ENCODE measurements at regions of chr21 and their contacts with region 1.

Region 1: DNA sequence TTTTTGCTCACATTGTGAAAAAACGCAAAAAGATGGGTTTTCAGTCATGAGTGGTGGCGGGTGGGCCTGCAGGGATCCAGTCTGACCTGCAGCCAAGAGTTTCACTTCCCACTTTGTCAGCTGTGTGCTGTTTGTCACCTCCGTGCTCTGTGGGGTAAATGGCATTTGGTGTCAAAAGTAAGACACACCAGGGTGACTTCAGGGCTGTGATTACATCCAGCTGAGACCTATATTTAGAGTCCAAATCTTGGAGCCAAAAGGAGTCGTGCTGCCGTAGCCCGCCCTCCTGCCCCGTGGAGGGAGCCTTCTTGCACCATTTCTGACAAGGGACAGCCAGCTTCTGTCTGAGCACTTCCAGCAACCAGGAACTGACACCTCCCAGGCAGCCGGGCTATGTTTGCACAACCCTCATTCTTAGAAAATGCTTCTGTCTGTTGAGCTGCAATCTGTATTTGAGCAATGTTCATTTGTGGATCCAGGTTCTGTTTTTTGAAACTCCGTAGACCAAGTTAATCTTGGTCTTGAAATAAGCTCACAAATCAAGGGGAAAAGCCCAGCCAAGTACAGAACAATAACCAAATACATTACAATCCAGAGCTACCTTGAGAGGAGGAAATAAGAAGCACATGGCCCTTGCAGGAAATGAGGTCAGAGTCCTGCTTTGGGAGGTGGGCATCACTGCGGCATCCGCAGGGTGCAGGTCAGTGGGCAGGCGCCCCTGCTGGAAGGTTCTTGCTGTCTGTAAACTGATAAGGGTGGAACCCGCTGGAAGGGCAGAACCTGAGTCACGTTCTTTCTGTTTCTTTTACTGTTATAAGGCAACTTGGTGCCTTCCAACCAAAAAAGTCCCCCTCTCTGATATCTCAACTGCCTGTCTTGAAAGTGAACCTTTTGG is 14.4 kb downstream of the ABCG1 start:
- DNase-seq: peak; percentile 93
- H3K4me3 Mint-ChIP-seq: peak overlapping the region; percentile 82
- H3K27ac Mint-ChIP-seq: peak overlapping the region; percentile 97
- H3K4me1 Mint-ChIP-seq: peaks cover 84% of the 10 kb centered on the region
- H3K27me3 Mint-ChIP-seq: no peaks in the 10 kb centered on the region

Region 2: GRCh38 chr21:41419911-41420862 is 813.1 kb before region 1 on chr21:
- intact Hi-C with region 1: loop called (anchors 10 kb)
- DNase-seq: peak; percentile 89
- H3K4me3 Mint-ChIP-seq: peak overlapping the region; percentile 86
- H3K27ac Mint-ChIP-seq: peak overlapping the region; percentile 86
- H3K4me1 Mint-ChIP-seq: peaks cover 52% of the 10 kb centered on the region
- H3K27me3 Mint-ChIP-seq: peaks cover 2% of the 10 kb centered on the region

Region 3: GRCh38 chr21:42021366-42022090 is 211.8 kb before region 1 on chr21:
- intact Hi-C with region 1: no loop called
- DNase-seq: no peak
- H3K4me3 Mint-ChIP-seq: no peak overlapping the region
- H3K27ac Mint-ChIP-seq: no peak overlapping the region
- H3K4me1 Mint-ChIP-seq: no peaks in the 10 kb centered on the region
- H3K27me3 Mint-ChIP-seq: peaks cover 8% of the 10 kb centered on the region

Region 4: GRCh38 chr21:42187976-42188653 is 45.2 kb before region 1 on chr21:
- intact Hi-C with region 1: loop called (anchors 1 kb)
- DNase-seq: peak; percentile 95
- H3K4me3 Mint-ChIP-seq: peak overlapping the region; percentile 68
- H3K27ac Mint-ChIP-seq: peak overlapping the region; percentile 93
- H3K4me1 Mint-ChIP-seq: peaks cover 65% of the 10 kb centered on the region
- H3K27me3 Mint-ChIP-seq: peaks cover 2% of the 10 kb centered on the region

Region 5: GRCh38 chr21:42220138-42220701 is 13.1 kb before region 1 on chr21:
- intact Hi-C with region 1: loop called (anchors 1 kb)
- DNase-seq: peak; percentile 95
- H3K4me3 Mint-ChIP-seq: peak overlapping the region; percentile 89
- H3K27ac Mint-ChIP-seq: peak overlapping the region; percentile 89
- H3K4me1 Mint-ChIP-seq: peaks cover 23% of the 10 kb centered on the region
- H3K27me3 Mint-ChIP-seq: peaks cover 2% of the 10 kb centered on the region

Region 6: GRCh38 chr21:42264245-42265195 is 31.2 kb after region 1 on chr21:
- intact Hi-C with region 1: no loop called
- DNase-seq: no peak
- H3K4me3 Mint-ChIP-seq: no peak overlapping the region
- H3K27ac Mint-ChIP-seq: no peak overlapping the region
- H3K4me1 Mint-ChIP-seq: peaks cover 20% of the 10 kb centered on the region
- H3K27me3 Mint-ChIP-seq: no peaks in the 10 kb centered on the region

Region 7: GRCh38 chr21:42276526-42277154 is 43.3 kb after region 1 on chr21:
- intact Hi-C with region 1: no loop called
- DNase-seq: no peak
- H3K4me3 Mint-ChIP-seq: no peak overlapping the region
- H3K27ac Mint-ChIP-seq: no peak overlapping the region
- H3K4me1 Mint-ChIP-seq: no peaks in the 10 kb centered on the region
- H3K27me3 Mint-ChIP-seq: no peaks in the 10 kb centered on the region

Region 8: DNA sequence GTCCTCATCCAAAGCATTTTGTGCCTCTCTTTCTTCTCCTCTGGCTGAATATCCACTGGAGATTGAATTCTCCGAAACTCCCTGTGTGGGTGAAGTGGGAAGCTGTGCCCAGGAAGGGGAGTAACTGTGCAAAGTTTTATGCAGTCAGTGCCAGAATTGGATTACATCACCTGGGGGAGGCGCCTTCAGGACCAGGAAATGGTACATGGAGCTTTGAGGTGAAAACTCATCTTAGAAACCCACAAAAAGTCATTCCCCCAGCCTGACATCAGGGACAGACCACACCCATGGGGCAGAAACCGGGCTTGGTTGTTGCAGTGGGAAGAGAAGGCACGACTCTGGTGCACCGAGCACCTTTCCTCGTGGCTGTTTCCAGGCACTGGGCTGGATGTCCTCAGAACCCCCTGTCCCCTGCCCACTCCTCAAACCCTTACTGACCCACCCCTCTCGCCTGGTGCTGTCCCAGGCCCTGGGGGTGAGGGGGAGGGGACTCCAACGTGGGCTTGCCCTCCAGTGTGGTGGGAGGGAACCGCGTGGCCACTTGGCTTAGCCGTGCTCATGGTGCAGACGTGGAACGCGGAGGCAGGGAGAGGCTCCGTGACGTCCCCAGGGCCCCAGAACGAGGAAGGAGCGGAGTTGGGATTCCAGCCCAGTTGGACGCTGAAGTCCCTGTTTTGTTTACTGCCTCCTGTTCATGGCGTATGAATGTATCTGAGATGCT is 66.2 kb after region 1 on chr21:
- intact Hi-C with region 1: no loop called
- DNase-seq: peak; percentile 83
- H3K4me3 Mint-ChIP-seq: no peak overlapping the region
- H3K27ac Mint-ChIP-seq: no peak overlapping the region
- H3K4me1 Mint-ChIP-seq: peaks cover 12% of the 10 kb centered on the region
- H3K27me3 Mint-ChIP-seq: no peaks in the 10 kb centered on the region

Region 9: GRCh38 chr21:42406201-42406621 is 172.9 kb after region 1 on chr21:
- intact Hi-C with region 1: loop called (anchors 1 kb)
- DNase-seq: peak; percentile 91
- H3K4me3 Mint-ChIP-seq: peak overlapping the region; percentile 93
- H3K27ac Mint-ChIP-seq: peak overlapping the region; percentile 88
- H3K4me1 Mint-ChIP-seq: peaks cover 49% of the 10 kb centered on the region
- H3K27me3 Mint-ChIP-seq: no peaks in the 10 kb centered on the region

Region 10: DNA sequence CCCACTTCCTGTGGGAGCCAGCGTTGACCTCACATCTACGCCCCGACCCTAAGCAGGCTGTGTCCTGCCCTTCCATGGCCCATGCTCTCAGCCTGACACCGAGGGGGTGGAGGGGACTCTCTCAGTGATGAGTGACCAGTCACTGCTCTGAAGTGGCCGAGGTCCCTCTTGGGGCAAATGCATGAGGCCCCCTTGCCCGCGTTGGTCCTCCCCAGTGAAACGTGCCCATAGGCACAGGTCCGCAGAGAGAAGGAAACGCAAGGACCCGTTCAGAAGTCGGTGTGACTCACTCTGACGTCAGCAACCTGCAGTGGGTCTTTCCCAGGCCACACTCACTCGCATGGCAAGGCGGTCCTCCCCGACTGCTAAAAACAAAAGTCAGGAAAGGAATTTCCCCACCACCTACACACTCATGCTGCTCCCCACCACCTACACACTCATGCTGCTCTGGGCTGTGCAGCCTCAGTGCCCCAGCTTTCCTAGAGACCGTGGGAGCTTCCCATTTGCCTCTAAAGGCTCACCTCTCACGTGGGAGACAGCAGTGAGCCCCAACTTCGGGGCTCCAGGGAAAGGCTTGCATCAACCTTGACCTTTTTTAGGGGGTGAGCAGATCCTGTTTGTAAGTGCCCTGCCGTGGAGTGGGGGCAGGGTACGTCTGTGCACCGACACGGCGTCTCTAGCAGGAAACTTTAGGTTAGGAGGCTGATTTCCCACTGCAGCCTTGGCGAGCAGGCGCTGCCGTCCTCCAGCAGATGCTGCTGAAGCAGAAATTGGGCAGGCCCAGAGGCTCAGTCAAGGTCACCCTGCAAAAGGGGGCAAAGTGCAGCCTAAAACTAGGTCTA is 181.8 kb after region 1 on chr21:
- intact Hi-C with region 1: loop called (anchors 5 kb)
- DNase-seq: peak; percentile 96
- H3K4me3 Mint-ChIP-seq: peak overlapping the region; percentile 77
- H3K27ac Mint-ChIP-seq: peak overlapping the region; percentile 99
- H3K4me1 Mint-ChIP-seq: peaks cover 58% of the 10 kb centered on the region
- H3K27me3 Mint-ChIP-seq: no peaks in the 10 kb centered on the region